ENCODE measurements at regions of chr1 and their contacts with region 1.

Region 1: GRCh38 chr1:11037740-11038182 is 9.3 kb downstream of the MASP2 start:
- DNase-seq: peak; percentile 92
- ATAC-seq: peak; percentile 99
- H3K4me3 Mint-ChIP-seq: no peak overlapping the region
- H3K27ac Mint-ChIP-seq: no peak overlapping the region
- H3K4me1 Mint-ChIP-seq: peaks cover 5% of the 10 kb centered on the region
- H3K27me3 Mint-ChIP-seq: peaks cover 2% of the 10 kb centered on the region
- CTCF ChIP-seq: peak; percentile 97

Region 2: GRCh38 chr1:10014016-10014415 is 1023.7 kb before region 1 on chr1:
- CTCF ChIA-PET with region 1: no interaction called
- POLR2A ChIA-PET with region 1: no interaction called
- intact Hi-C with region 1: no loop called
- DNase-seq: no peak
- ATAC-seq: no peak
- H3K4me3 Mint-ChIP-seq: no peak overlapping the region
- H3K27ac Mint-ChIP-seq: no peak overlapping the region
- H3K4me1 Mint-ChIP-seq: peaks cover 5% of the 10 kb centered on the region
- H3K27me3 Mint-ChIP-seq: no peaks in the 10 kb centered on the region
- CTCF ChIP-seq: no peak

Region 3: GRCh38 chr1:10950316-10951172 is 87.2 kb before region 1 on chr1:
- CTCF ChIA-PET with region 1: no interaction called
- POLR2A ChIA-PET with region 1: no interaction called
- intact Hi-C with region 1: no loop called
- DNase-seq: no peak
- ATAC-seq: no peak
- H3K4me3 Mint-ChIP-seq: no peak overlapping the region
- H3K27ac Mint-ChIP-seq: no peak overlapping the region
- H3K4me1 Mint-ChIP-seq: no peaks in the 10 kb centered on the region
- H3K27me3 Mint-ChIP-seq: peaks cover 2% of the 10 kb centered on the region
- CTCF ChIP-seq: no peak

Region 4: GRCh38 chr1:11012250-11013171 is 25.2 kb before region 1 on chr1 and contains the start of gene TARDBP:
- CTCF ChIA-PET with region 1: interaction called, 26 read pairs
- POLR2A ChIA-PET with region 1: interaction called, 5 read pairs
- intact Hi-C with region 1: no loop called
- DNase-seq: peak; percentile 92
- ATAC-seq: peak; percentile 92
- H3K4me3 Mint-ChIP-seq: peak within 1 kb of the TSS; percentile 96
- H3K27ac Mint-ChIP-seq: peak within 1 kb of the TSS; percentile 99
- H3K4me1 Mint-ChIP-seq: peaks cover 27% of the 10 kb centered on the region
- H3K27me3 Mint-ChIP-seq: no peaks in the 10 kb centered on the region
- CTCF ChIP-seq: no peak
- total RNA-seq, gene TARDBP: 152 to 163 TPM

Region 5: DNA sequence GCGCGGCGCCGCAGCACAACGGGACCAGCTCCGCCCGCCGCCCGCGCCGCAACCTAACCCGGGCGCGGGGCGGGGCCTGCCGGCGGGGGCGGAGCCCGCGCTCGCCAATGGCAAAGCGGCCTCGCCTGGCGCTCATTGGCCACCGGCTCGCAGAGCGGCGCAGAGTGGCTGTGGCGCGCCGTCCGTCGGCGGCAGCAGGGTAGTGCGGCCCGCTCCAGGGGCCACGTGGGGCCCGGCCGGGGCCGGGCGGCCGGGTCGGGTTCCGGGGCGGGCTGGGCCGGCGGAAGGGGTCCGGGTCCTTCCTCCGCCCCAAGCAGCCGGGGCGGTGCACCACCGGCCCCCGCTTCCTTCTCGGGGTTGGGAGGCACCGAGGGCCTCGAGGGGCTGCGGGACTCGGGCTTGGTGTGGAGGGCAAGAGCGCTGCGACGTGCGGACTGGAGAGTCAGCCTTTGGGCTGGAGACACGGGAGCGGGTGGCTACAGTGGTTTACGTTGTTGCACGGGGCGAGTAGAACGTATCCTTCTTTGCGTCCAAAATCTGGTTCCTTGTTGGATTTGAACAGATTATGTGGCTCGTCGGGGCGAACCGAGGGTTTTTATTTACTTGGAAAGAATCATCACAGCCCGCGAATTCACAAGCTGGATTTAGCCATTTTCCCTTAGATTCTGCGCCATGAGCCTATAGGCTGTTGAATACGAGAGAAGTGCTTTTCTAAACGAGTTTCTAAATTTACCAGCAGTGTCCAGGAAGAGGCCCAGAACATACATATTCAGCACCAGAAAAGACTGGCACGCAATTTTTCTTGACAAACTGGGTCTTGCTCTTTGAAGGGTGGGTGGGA is 22.4 kb after region 1 on chr1 and contains the start of gene SRM:
- CTCF ChIA-PET with region 1: interaction called, 78 read pairs
- POLR2A ChIA-PET with region 1: interaction called, 25 read pairs
- intact Hi-C with region 1: no loop called
- DNase-seq: peak; percentile 90
- ATAC-seq: peak; percentile 95
- H3K4me3 Mint-ChIP-seq: peak within 1 kb of the TSS; percentile 96
- H3K27ac Mint-ChIP-seq: peak within 1 kb of the TSS; percentile 98
- H3K4me1 Mint-ChIP-seq: peaks cover 41% of the 10 kb centered on the region
- H3K27me3 Mint-ChIP-seq: no peaks in the 10 kb centered on the region
- CTCF ChIP-seq: peak; percentile 42
- total RNA-seq, gene SRM: 240 TPM

Region 6: GRCh38 chr1:11099310-11100149 is 61.8 kb after region 1 on chr1 and contains the start of gene EXOSC10:
- CTCF ChIA-PET with region 1: interaction called, 74 read pairs
- POLR2A ChIA-PET with region 1: interaction called, 5 read pairs
- intact Hi-C with region 1: no loop called
- DNase-seq: peak; percentile 95
- ATAC-seq: peak; percentile 97
- H3K4me3 Mint-ChIP-seq: peak within 1 kb of the TSS; percentile 91
- H3K27ac Mint-ChIP-seq: peak within 1 kb of the TSS; percentile 95
- H3K4me1 Mint-ChIP-seq: peaks cover 11% of the 10 kb centered on the region
- H3K27me3 Mint-ChIP-seq: no peaks in the 10 kb centered on the region
- CTCF ChIP-seq: no peak
- total RNA-seq, gene EXOSC10: 66.6 to 69.8 TPM

Region 7: DNA sequence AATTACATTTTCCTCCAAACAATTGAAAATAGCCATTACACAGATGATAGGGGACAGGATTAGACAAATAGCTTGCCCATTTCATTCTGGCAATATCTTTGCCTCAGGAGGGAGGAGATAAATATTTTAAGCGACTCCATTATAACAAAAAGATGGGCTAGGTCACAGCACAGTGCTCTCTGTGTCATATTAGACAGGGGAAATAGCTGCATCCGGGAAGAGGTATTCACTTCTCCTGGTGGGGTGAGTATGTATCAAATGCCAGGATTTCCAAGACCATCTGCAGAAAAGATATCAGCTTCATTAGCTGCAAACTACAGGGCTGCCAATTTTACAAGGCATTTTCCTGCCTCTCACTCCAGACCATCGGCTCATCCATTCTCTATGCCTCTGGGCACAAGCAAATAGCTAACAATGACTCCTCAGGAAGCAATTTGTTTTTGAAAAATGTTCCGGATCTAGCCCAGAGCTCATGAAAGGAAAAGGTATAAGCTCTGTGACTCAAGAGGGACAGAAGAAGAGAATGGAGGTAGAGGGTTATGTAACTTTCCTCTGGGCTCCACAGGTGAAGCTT is 109.5 kb after region 1 on chr1:
- CTCF ChIA-PET with region 1: interaction called, 21 read pairs
- POLR2A ChIA-PET with region 1: no interaction called
- intact Hi-C with region 1: no loop called
- DNase-seq: no peak
- ATAC-seq: no peak
- H3K4me3 Mint-ChIP-seq: no peak overlapping the region
- H3K27ac Mint-ChIP-seq: no peak overlapping the region
- H3K4me1 Mint-ChIP-seq: peaks cover 26% of the 10 kb centered on the region
- H3K27me3 Mint-ChIP-seq: no peaks in the 10 kb centered on the region
- CTCF ChIP-seq: no peak

Region 8: GRCh38 chr1:11214698-11215380 is 177.1 kb after region 1 on chr1:
- CTCF ChIA-PET with region 1: interaction called, 16 read pairs
- POLR2A ChIA-PET with region 1: no interaction called
- intact Hi-C with region 1: no loop called
- DNase-seq: no peak
- ATAC-seq: no peak
- H3K4me3 Mint-ChIP-seq: no peak overlapping the region
- H3K27ac Mint-ChIP-seq: no peak overlapping the region
- H3K4me1 Mint-ChIP-seq: no peaks in the 10 kb centered on the region
- H3K27me3 Mint-ChIP-seq: no peaks in the 10 kb centered on the region
- CTCF ChIP-seq: no peak

Region 9: GRCh38 chr1:11645670-11646265 is 608.0 kb after region 1 on chr1:
- CTCF ChIA-PET with region 1: interaction called, 60 read pairs
- POLR2A ChIA-PET with region 1: no interaction called
- intact Hi-C with region 1: loop called (anchors 5 kb)
- DNase-seq: peak; percentile 92
- ATAC-seq: peak; percentile 46
- H3K4me3 Mint-ChIP-seq: no peak overlapping the region
- H3K27ac Mint-ChIP-seq: no peak overlapping the region
- H3K4me1 Mint-ChIP-seq: peaks cover 11% of the 10 kb centered on the region
- H3K27me3 Mint-ChIP-seq: no peaks in the 10 kb centered on the region
- CTCF ChIP-seq: peak; percentile 85

Measured in activated CD8-positive, alpha-beta T cell treated with anti-CD3 and anti-CD28 coated beads for 36 hours (primary cell).